ENCODE measurements at regions of chr11 and their contacts with region 1.

Region 1: DNA sequence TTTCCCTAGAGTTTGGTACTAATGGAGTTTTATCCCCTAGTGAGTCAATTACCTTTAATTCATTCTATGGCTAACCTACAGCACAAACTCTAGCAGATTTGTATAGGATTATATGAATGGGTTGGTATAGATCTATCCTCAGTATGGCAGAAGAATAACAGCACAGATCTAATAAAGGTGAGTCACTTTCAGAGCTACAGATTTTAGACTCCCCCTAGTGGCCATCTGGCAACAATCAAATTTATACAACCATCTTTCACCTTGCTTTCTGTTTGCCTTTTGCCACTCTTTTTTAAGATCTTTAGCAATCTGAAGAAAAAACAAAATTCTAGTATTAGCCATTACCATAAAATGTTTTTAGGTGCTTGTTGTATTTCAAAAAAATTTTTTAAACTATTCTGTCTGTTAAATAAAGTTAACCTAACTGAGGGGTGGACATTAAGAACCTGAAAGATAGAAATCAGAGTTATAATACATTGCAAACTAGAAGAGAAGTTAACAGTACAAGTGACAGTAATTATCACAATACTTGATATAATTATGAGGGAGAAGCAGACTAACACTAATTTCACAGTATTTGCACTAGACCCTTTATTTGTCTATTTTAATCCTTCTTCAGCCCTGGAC is 25.8 kb downstream of the DDIAS start:
- DNase-seq: no peak
- ATAC-seq: no peak

Region 2: GRCh38 chr11:82867495-82868082 is 59.8 kb before region 1 on chr11:
- intact Hi-C with region 1: loop called (anchors 10 kb)
- DNase-seq: no peak
- ATAC-seq: peak; percentile 19

Region 3: DNA sequence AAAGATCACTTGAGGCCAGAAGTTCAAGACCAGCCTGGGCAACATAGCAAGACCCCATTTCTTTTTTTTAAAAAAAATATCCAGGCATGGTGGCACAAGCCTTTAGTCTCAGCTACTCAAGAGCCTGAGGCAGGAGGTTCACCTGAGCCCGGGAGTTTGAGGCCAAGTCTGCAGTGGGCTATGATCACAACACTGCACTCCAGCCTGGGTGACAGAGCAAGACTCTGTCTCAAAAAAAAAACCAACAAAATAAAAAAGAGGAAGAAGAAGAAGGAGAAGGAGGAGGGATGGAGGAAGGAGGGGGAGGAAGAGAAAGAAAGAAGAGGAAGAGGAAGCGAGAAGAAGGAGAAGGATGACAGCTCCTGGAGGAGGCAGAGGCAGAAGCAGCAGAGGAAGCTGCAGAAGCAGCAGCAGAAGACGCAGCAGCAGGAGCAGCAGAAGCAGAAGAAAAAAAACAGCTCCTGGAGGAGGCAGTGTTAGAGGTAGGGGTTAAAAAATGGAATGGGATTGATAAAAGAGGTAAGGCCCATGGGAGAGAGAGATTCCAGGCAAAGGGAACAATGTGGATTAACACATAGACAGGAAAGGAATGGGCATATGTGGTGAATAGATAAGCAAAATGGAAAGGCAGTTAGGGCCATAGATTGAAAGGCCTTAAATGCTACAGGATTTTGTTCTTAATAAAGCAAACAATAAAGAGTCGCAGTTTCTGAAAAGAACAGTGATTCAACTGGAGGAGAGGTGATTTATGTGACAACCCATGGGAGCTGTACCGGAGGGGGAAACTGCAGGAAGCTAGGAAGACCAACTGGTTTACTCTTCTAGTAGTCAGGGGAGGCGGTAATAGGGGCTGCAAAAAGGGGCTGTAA is 38.0 kb before region 1 on chr11:
- intact Hi-C with region 1: no loop called
- DNase-seq: no peak
- ATAC-seq: peak; percentile 44